Esophagus muscularis mucosa (tissue), 4 donors: ENCODE measurements at regions of chr7 and their contacts with region 1.

Region 1: GRCh38 chr7:50664461-50664922 is 99.3 kb upstream of the DDC start:
- DNase-seq: no peak
- H3K4me3 ChIP-seq: no peak overlapping the region
- H3K27ac ChIP-seq: peak overlapping the region in 2 of 4 donors; percentile 7 to 24
- H3K4me1 ChIP-seq: peaks cover 80 to 86% (median 82%) of the 10 kb centered on the region in 4 donors
- H3K27me3 ChIP-seq: no peaks in the 10 kb centered on the region
- CTCF ChIP-seq: no peak
- EP300 ChIP-seq: no peak
- POLR2A ChIP-seq: peak; percentile 20

Region 2: DNA sequence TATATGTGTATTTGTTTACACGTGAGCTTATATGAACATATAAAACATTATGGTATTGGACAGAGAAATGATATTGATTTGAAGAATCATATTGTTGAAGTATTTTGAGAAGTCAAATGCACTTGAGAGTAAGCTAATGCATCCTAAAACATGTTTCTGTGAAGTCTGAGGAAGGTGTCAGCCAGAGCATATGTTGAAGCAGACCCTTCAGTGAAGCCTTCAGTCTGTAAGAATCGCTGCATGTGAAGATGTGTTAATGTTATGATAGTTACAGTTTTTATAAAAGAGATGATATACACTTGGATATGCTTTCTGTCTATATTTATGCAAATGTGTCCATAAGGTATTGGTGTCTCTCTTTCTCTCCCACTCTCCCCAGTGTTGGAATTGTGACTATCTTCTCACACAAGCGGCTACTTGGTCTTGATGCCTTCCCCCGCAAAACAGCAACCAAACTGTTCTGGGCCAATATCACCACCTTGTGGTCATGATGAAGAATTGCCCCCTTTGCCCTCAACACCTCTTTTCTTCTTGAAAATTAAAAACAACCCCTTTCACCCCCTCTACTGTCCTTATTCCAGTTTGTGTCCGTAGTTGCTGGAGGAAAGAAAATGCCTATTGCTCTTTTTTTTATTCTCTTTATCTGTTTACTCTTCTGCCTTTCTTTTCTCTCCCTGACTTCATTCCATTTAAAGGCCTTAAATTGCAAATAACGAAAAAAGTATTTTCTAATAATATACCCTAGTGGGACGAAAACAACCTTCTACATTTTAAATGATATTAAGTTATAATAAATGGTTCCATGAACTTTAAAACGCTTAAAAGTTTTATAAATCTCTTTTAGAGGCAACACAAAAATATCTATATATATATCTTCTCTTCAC is 295.1 kb before region 1 on chr7:
- intact Hi-C with region 1: no loop called
- DNase-seq: no peak
- H3K4me3 ChIP-seq: no peak overlapping the region
- H3K27ac ChIP-seq: no peak overlapping the region
- H3K4me1 ChIP-seq: no peaks in the 10 kb centered on the region
- H3K27me3 ChIP-seq: no peaks in the 10 kb centered on the region
- CTCF ChIP-seq: peak in 2 of 3 experiments; percentile 21 to 24
- EP300 ChIP-seq: no peak
- POLR2A ChIP-seq: no peak

Region 3: GRCh38 chr7:50588937-50589336 is 75.6 kb before region 1 on chr7:
- intact Hi-C with region 1: no loop called
- DNase-seq: no peak
- H3K4me3 ChIP-seq: no peak overlapping the region
- H3K27ac ChIP-seq: no peak overlapping the region
- H3K4me1 ChIP-seq: no peaks in the 10 kb centered on the region
- H3K27me3 ChIP-seq: no peaks in the 10 kb centered on the region
- CTCF ChIP-seq: peak in 1 of 3 experiments; percentile 20
- EP300 ChIP-seq: no peak
- POLR2A ChIP-seq: no peak

Region 4: DNA sequence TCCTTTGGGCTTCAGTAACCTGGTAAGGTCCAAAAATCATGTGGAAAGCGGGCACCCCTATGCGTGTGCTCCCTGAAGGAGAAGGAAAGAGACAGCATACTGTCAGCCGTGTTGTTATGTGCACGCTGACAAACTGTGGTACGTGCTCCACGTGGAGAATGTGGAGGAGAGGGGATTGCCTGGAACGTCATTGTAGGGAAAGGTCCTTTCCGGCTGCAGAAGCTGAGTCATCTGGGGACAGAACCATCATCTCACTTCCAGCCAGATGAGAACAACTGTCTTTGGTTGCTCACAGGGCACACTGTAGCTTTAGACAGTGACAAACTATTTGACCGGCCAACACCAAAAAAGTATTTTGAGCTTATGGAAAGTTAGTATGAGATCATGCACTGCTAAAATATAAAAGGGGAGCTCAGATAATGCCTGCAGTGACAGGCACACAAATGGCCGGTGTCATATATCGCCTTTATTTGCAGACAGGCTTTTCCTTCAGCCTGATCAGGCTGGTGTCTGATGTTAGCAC is 157.0 kb after region 1 on chr7:
- intact Hi-C with region 1: no loop called
- DNase-seq: no peak
- H3K4me3 ChIP-seq: no peak overlapping the region
- H3K27ac ChIP-seq: no peak overlapping the region
- H3K4me1 ChIP-seq: no peaks in the 10 kb centered on the region
- H3K27me3 ChIP-seq: peaks cover 0 to 12% (median 0%) of the 10 kb centered on the region in 4 donors
- CTCF ChIP-seq: no peak
- EP300 ChIP-seq: no peak
- POLR2A ChIP-seq: no peak

Region 5: GRCh38 chr7:51315393-51316261 is 651.1 kb after region 1 on chr7:
- intact Hi-C with region 1: loop called (anchors 10 kb)
- DNase-seq: no peak
- H3K4me3 ChIP-seq: peak overlapping the region; percentile 69 to 90 (median 80)
- H3K27ac ChIP-seq: peak overlapping the region; percentile 83 to 89 (median 85)
- H3K4me1 ChIP-seq: peaks cover 0 to 60% (median 55%) of the 10 kb centered on the region in 4 donors
- H3K27me3 ChIP-seq: peaks cover 0 to 16% (median 0%) of the 10 kb centered on the region in 4 donors
- CTCF ChIP-seq: no peak
- EP300 ChIP-seq: no peak
- POLR2A ChIP-seq: no peak